Naive thymus-derived CD4-positive, alpha-beta T cell (primary cell): ENCODE measurements at regions of chr15 and their contacts with region 1.

Region 1: GRCh38 chr15:41230650-41231533 is at the starts of genes CHP1 and EXD1:
- DNase-seq: peak; percentile 86 to 96 (median 90)
- ATAC-seq: peak; percentile 96
- H3K4me3 ChIP-seq: peak within 1 kb of the TSS; percentile 92
- H3K4me3 Mint-ChIP-seq: peak within 1 kb of the TSS; percentile 85 to 94 (median 91)
- H3K27ac ChIP-seq: peak within 1 kb of the TSS; percentile 82
- H3K27ac Mint-ChIP-seq: peak within 1 kb of the TSS; percentile 81 to 94 (median 92)
- H3K4me1 ChIP-seq: peaks cover 10 to 13% of the 10 kb centered on the region in 2 donors
- H3K4me1 Mint-ChIP-seq: peaks cover 17 to 36% (median 25%) of the 10 kb centered on the region in 7 donors
- H3K27me3 ChIP-seq: no peaks in the 10 kb centered on the region
- H3K27me3 Mint-ChIP-seq: peaks cover 0 to 11% (median 0%) of the 10 kb centered on the region in 5 donors
- total RNA-seq, gene CHP1: 20.2 to 70.6 (median 24.7) TPM
- total RNA-seq, gene EXD1: not detected

Region 2: DNA sequence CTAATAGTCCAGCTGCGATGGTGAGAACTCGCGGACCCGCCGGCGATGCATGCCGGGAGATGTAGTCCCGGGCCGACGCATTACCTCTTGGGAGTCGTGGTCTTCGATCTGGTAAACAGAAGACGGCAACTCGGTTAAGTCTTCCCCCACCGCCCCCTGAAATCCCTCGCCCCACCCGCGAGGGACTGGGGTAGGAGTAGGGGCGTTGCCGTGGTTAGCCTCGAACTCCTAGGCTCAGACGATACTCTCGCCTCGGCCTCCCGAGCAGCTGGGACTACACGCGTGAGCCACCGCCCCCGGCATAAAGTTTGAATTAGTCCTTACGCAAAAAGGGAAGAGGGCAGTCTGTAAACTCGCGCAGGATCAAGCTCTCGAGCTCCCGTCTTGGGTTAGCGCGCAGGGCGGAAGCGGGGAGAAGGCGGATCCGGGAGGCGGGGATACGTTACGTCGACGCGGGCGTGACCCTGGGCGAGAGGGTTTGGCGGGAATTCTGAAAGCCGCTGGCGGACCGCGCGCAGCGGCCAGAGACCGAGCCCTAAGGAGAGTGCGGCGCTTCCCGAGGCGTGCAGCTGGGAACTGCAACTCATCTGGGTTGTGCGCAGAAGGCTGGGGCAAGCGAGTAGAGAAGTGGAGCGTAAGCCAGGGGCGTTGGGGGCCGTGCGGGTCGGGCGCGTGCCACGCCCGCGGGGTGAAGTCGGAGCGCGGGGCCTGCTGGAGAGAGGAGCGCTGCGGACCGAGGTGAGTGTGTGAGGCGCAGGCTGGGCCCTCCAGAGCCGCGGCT is 536.0 kb before region 1 on chr15 and contains the start of gene RAD51:
- CTCF ChIA-PET with region 1: no interaction called
- POLR2A ChIA-PET with region 1: no interaction called
- intact Hi-C with region 1: loop called in 1 of 2 experiments (anchors 10 kb)
- DNase-seq: peak; percentile 81 to 93 (median 92)
- ATAC-seq: peak; percentile 97
- H3K4me3 ChIP-seq: peak within 1 kb of the TSS; percentile 97
- H3K4me3 Mint-ChIP-seq: peak within 1 kb of the TSS; percentile 93 to 100 (median 95)
- H3K27ac ChIP-seq: peak within 1 kb of the TSS; percentile 91
- H3K27ac Mint-ChIP-seq: peak within 1 kb of the TSS; percentile 95 to 100 (median 99)
- H3K4me1 ChIP-seq: peaks cover 10% of the 10 kb centered on the region in 2 donors
- H3K4me1 Mint-ChIP-seq: peaks cover 14 to 42% (median 22%) of the 10 kb centered on the region in 7 donors
- H3K27me3 ChIP-seq: no peaks in the 10 kb centered on the region
- H3K27me3 Mint-ChIP-seq: no peaks in the 10 kb centered on the region
- total RNA-seq, gene RAD51: 0.51 to 51.5 (median 1.4) TPM

Region 3: DNA sequence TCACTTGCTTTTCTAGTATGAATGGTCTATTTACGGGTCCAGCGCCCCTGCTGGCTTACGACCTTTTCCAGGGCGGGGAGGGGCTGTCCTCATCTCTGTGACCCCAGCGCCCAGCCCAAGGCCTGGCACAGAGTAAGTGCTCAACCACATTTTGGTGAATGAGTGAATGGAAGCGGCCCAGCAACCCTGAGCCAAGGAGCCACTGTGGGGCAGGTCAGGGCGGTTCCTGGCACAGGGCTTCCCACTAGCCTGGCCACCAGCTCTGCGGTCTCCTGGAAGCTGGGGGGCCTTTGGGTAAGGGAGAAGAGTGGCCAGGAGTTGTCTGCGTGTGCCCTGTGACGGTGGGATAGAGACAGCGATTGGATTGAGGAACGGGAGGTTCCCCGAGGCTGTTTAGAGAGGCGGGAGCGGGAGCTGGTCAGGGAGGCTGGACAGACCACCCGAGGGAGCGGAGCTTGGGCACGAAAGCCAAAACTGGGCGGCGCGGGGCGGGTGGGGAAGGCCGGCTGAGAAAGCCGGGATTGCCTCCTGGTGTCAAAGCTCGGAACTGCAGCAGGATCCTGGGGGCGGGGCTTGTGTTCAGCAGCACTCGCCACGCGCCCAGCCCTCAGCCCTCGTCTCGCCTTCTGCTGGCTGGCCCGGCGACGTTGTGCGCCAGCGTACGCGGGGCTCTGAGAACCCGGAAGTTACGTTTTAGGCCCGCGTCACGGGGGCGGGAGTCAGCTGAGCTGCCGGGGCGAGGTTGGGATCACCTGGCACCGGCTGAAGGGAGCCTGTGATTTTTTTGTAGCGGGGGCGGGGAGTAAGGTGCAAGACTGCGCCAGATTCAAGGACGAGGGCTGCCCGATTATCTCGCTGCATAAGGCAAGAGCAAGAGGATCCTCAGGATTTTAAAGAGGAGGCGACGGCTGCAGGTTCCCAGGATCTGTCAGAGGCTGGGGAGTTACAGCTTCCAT is 336.9 kb before region 1 on chr15 and contains the start of gene VPS18:
- CTCF ChIA-PET with region 1: interaction called, 5 read pairs
- POLR2A ChIA-PET with region 1: interaction called, 3 read pairs
- intact Hi-C with region 1: loop called in 1 of 2 experiments (anchors 1 kb)
- DNase-seq: peak; percentile 96 to 99 (median 98)
- ATAC-seq: peak; percentile 99
- H3K4me3 ChIP-seq: peak within 1 kb of the TSS; percentile 94
- H3K4me3 Mint-ChIP-seq: peak within 1 kb of the TSS; percentile 96 to 99 (median 98)
- H3K27ac ChIP-seq: peak within 1 kb of the TSS; percentile 83
- H3K27ac Mint-ChIP-seq: peak within 1 kb of the TSS; percentile 87 to 98 (median 96)
- H3K4me1 ChIP-seq: peaks cover 17 to 18% of the 10 kb centered on the region in 2 donors
- H3K4me1 Mint-ChIP-seq: peaks cover 30 to 47% (median 37%) of the 10 kb centered on the region in 7 donors
- H3K27me3 ChIP-seq: no peaks in the 10 kb centered on the region
- H3K27me3 Mint-ChIP-seq: peaks cover 0 to 7% (median 0%) of the 10 kb centered on the region in 5 donors
- total RNA-seq, gene VPS18: 19.9 to 22.3 (median 20.5) TPM

Region 4: DNA sequence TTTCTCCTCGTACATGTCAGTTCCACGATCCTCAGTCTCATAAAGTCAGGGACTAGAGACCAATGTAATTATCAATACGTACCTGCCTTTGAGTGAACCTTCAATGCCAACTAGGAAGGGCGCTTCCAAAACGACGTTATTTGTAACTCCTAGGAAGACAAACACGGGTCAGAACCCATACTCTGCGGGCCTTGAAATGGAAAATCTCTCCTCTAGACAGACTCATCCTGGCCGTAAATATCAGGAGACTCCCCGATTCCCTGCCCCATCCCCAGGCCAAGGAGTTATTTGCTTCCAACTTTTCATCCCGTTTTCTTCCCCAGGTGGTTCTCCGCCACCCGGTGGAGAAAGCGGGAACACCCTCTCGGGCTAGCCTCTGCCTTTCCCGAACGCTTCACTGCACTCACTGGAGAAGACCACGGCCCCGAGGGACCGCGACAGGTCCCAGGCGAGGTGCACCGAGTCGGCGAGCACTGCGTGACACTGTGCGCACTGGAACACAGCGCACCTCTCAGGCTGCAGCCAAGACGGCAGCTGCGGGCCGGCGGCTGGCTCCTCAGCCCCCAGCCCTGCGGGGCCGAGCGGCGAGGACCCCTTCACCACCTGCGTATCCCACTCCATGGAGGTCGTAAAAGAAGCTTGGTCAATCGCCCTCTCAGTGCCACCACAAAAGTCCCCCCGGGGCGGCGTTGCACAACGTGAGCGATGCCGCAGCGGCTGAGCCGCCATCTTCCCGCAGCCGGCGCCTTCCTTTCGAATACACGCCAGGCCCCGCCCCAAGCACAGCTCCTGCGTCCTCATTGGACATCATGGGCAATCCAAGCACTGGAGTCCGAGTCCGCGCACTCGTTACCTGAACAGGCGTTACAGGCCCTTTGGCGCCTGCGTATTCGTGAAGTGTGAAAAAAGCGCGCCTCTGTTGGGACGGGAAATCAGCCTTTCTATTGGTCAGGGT is 101.2 kb after region 1 on chr15 and contains the start of gene OIP5:
- CTCF ChIA-PET with region 1: no interaction called
- POLR2A ChIA-PET with region 1: no interaction called
- intact Hi-C with region 1: loop called (anchors 1 kb)
- DNase-seq: peak; percentile 83 to 99 (median 97)
- ATAC-seq: peak; percentile 98
- H3K4me3 ChIP-seq: peak within 1 kb of the TSS; percentile 95
- H3K4me3 Mint-ChIP-seq: peak within 1 kb of the TSS; percentile 87 to 100 (median 97)
- H3K27ac ChIP-seq: peak within 1 kb of the TSS; percentile 52
- H3K27ac Mint-ChIP-seq: peak within 1 kb of the TSS; percentile 77 to 97 (median 91)
- H3K4me1 ChIP-seq: peaks cover 9 to 13% of the 10 kb centered on the region in 2 donors
- H3K4me1 Mint-ChIP-seq: peaks cover 12 to 32% (median 29%) of the 10 kb centered on the region in 7 donors
- H3K27me3 ChIP-seq: no peaks in the 10 kb centered on the region
- H3K27me3 Mint-ChIP-seq: no peaks in the 10 kb centered on the region
- total RNA-seq, gene OIP5: 0.32 to 15.2 (median 0.54) TPM in 4 of 5 experiments, not detected in the other

Region 5: DNA sequence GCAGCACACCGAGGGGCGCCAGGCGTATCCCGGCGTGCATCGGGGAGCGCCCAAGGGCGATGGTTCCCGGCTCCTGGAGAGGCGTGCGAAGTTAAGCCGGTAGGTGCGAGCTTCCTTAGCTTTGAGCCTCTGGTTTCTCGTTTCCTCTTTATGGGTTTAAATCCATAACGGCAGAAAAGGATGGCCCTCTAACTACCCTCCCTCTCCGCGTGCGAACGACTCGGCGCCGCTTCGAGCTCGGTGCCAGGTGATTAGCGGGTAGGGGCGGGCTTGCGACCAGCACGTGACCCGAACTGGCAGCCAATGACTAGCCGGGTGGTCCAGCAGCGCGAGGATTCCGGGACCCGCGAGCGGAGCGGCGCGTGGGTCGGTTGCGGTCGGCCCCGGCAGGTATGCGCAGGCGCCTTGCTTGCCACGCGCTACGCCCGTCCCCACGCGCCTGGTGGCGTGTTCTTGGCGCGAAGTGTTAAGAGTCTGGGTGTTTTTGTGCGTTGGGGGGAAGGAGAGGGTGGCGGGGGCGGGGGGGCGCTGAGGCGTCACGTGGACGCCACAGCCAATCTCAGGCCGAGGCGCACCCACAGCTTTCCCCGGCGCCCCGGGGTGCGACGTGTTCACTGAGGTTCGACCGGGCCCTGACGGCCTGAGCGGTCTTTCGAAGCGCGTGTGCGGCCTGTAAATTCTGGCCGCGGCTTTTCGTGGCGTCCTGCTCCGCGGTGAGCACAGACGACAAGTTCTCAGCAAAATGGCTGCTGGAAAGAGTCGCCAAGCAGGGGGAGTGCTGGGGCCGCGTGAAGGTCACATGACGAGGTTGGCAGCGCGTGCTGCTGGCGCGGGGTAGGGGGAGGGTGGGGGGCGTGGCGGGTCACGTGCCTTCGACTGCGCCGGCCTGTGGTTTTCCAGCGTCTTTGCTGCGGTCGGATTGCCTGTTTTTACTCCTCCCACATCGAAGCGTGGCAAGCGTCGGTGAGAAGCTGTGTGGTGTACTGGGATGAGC is 390.6 kb after region 1 on chr15:
- CTCF ChIA-PET with region 1: no interaction called
- POLR2A ChIA-PET with region 1: no interaction called
- intact Hi-C with region 1: loop called in 1 of 2 experiments (anchors 5 kb)
- DNase-seq: peak; percentile 56 to 81 (median 78)
- ATAC-seq: peak; percentile 87
- H3K4me3 ChIP-seq: peak overlapping the region; percentile 67
- H3K4me3 Mint-ChIP-seq: peak overlapping the region; percentile 55 to 87 (median 78)
- H3K27ac ChIP-seq: peak overlapping the region; percentile 41
- H3K27ac Mint-ChIP-seq: peak overlapping the region; percentile 68 to 87 (median 77)
- H3K4me1 ChIP-seq: peaks cover 5 to 8% of the 10 kb centered on the region in 2 donors
- H3K4me1 Mint-ChIP-seq: peaks cover 5 to 29% (median 18%) of the 10 kb centered on the region in 7 donors
- H3K27me3 ChIP-seq: no peaks in the 10 kb centered on the region
- H3K27me3 Mint-ChIP-seq: peaks cover 0 to 29% (median 0%) of the 10 kb centered on the region in 5 donors

Region 6: DNA sequence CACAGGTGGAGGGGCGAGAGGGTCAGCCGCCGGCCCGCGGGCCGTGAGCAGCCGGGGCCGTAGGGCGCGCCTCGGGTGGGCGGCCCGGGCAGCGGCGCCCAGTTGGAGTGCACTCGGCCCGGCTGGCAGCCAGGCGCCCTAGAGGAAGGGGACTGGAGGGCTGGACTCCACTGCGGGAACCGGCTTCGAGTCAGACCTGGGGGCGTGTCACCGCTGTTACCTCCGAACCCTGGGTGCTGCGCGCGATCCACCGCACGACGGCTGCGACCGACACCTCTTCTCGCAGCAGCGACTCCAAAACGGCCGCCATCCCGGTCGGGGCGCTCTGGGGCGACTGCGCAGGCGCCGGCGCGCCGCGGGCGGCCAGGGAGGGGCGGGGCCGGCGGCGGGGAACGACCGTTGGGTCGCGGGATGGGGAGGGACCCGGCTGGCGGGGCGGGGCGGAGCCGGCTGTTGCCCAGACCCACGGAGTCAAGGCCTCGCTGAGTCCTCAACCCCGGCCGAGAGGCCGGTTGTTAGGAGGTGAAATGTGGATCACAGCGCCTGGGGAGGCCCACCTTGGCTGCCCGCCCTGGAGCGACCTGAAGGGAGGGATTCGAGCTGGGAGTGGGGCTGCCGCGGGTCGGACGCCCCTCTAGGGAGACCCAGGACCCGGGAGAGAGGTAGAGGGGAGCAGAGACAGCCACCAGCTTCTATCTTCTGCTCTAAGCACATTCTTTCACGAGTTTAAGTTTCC is 1506.1 kb after region 1 on chr15 and contains the start of gene CDAN1:
- CTCF ChIA-PET with region 1: no interaction called
- POLR2A ChIA-PET with region 1: no interaction called
- intact Hi-C with region 1: loop called in 1 of 2 experiments (anchors 5 kb)
- DNase-seq: peak; percentile 80 to 95 (median 87)
- ATAC-seq: peak; percentile 97
- H3K4me3 ChIP-seq: peak within 1 kb of the TSS; percentile 65
- H3K4me3 Mint-ChIP-seq: peak within 1 kb of the TSS; percentile 79 to 90 (median 86)
- H3K27ac ChIP-seq: peak within 1 kb of the TSS; percentile 87
- H3K27ac Mint-ChIP-seq: peak within 1 kb of the TSS; percentile 78 to 91 (median 86)
- H3K4me1 ChIP-seq: peaks cover 5 to 6% of the 10 kb centered on the region in 2 donors
- H3K4me1 Mint-ChIP-seq: peaks cover 13 to 26% (median 20%) of the 10 kb centered on the region in 7 donors
- H3K27me3 ChIP-seq: no peaks in the 10 kb centered on the region
- H3K27me3 Mint-ChIP-seq: no peaks in the 10 kb centered on the region
- total RNA-seq, gene CDAN1: 25.8 to 38.0 (median 28.3) TPM